Endothelial cell of umbilical vein (primary cell): ENCODE measurements at regions of chr2 and their contacts with region 1.

Region 1: GRCh38 chr2:200652158-200652557 is 66.3 kb downstream of the AOX1 start:
- DNase-seq: no peak
- H3K4me3 ChIP-seq: no peak overlapping the region
- H3K27ac ChIP-seq: no peak overlapping the region
- H3K4me1 ChIP-seq: no peaks in the 10 kb centered on the region
- H3K27me3 ChIP-seq: peaks cover 4 to 7% of the 10 kb centered on the region in 2 experiments
- CTCF ChIP-seq: no peak
- POLR2A ChIP-seq: no peak

Region 2: GRCh38 chr2:199895406-199895805 is 756.8 kb before region 1 on chr2:
- CTCF ChIA-PET with region 1: no interaction called
- POLR2A ChIA-PET with region 1: no interaction called
- dilution Hi-C with region 1: no loop called
- intact Hi-C with region 1: no loop called
- DNase-seq: no peak
- H3K4me3 ChIP-seq: no peak overlapping the region
- H3K27ac ChIP-seq: no peak overlapping the region
- H3K4me1 ChIP-seq: no peaks in the 10 kb centered on the region
- H3K27me3 ChIP-seq: no peaks in the 10 kb centered on the region
- CTCF ChIP-seq: no peak
- POLR2A ChIP-seq: no peak

Region 3: GRCh38 chr2:200615247-200615646 is 36.9 kb before region 1 on chr2:
- CTCF ChIA-PET with region 1: no interaction called
- POLR2A ChIA-PET with region 1: no interaction called
- dilution Hi-C with region 1: no loop called
- intact Hi-C with region 1: loop called (anchors 1 kb)
- DNase-seq: peak; percentile 21
- H3K4me3 ChIP-seq: no peak overlapping the region
- H3K27ac ChIP-seq: no peak overlapping the region
- H3K4me1 ChIP-seq: no peaks in the 10 kb centered on the region
- H3K27me3 ChIP-seq: no peaks in the 10 kb centered on the region
- CTCF ChIP-seq: peak in 1 of 2 donors; percentile 5
- POLR2A ChIP-seq: no peak

Region 4: DNA sequence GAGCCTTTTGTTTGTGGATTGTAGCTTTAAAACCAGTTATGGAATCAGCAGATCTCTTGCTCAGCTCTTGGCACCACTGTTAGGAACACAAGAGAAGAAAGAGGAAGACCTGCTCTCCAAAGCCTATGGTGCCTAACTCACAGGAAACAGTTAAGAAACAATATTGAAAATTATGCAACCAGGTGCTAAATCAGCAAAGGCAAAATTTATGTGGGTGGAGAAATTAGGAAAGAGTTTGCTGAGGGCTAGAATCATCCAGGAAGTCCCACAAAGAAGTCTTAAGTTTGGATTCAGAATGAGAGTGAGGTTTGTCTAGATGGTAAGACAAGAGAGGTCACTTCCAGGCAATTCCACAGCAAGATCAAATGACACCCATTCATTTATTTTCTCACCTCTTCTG is 16.9 kb before region 1 on chr2:
- CTCF ChIA-PET with region 1: no interaction called
- POLR2A ChIA-PET with region 1: no interaction called
- dilution Hi-C with region 1: no loop called
- intact Hi-C with region 1: no loop called
- DNase-seq: no peak
- H3K4me3 ChIP-seq: no peak overlapping the region
- H3K27ac ChIP-seq: no peak overlapping the region
- H3K4me1 ChIP-seq: no peaks in the 10 kb centered on the region
- H3K27me3 ChIP-seq: peaks cover 0 to 4% of the 10 kb centered on the region in 2 experiments
- CTCF ChIP-seq: no peak
- POLR2A ChIP-seq: no peak